Activated CD4-positive, alpha-beta T cell treated with anti-CD3 and anti-CD28 coated beads, Interleukin-2, amount 10 ng/mL, durations not matched to agents 24 days and 14 days (primary cell): ENCODE measurements at regions of chr6 and their contacts with region 1.

Region 1: GRCh38 chr6:2081155-2082138 is 164.0 kb downstream of the GMDS start:
- DNase-seq: peak; percentile 79
- H3K4me3 Mint-ChIP-seq: peak overlapping the region; percentile 3
- H3K27ac Mint-ChIP-seq: peak overlapping the region; percentile 35
- H3K4me1 Mint-ChIP-seq: peaks cover 33% of the 10 kb centered on the region
- H3K27me3 Mint-ChIP-seq: peaks cover 14% of the 10 kb centered on the region

Region 2: DNA sequence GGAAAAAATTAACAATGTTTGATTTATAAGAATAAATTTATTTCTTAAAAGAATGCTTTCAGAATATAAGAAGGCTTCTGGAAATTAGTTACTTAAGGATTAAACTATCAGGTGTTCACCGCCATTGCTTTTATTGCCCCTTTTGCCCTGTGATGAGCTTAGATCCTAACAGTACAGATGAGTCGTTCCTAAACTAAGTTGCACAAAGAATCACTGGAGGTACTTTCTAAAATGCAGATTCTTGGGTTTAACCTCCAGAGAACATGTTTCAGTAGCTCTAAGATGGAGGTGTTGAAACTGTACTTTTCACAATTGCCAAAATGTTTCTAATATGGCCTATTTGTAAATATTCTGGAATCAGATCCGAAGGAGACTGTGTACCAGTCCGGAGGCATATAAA is 47.9 kb before region 1 on chr6:
- intact Hi-C with region 1: loop called (anchors 1 kb)
- DNase-seq: no peak
- H3K4me3 Mint-ChIP-seq: no peak overlapping the region
- H3K27ac Mint-ChIP-seq: no peak overlapping the region
- H3K4me1 Mint-ChIP-seq: peaks cover 26% of the 10 kb centered on the region
- H3K27me3 Mint-ChIP-seq: peaks cover 7% of the 10 kb centered on the region

Region 3: GRCh38 chr6:2196079-2196679 is 114.7 kb after region 1 on chr6:
- intact Hi-C with region 1: no loop called
- DNase-seq: peak; percentile 80
- H3K4me3 Mint-ChIP-seq: no peak overlapping the region
- H3K27ac Mint-ChIP-seq: no peak overlapping the region
- H3K4me1 Mint-ChIP-seq: peaks cover 2% of the 10 kb centered on the region
- H3K27me3 Mint-ChIP-seq: peaks cover 3% of the 10 kb centered on the region